ENCODE measurements at regions of chr18 and their contacts with region 1.

Region 1: GRCh38 chr18:24538414-24539264 is 78.2 kb downstream of the HRH4 start:
- DNase-seq: no peak
- H3K4me3 ChIP-seq: no peak overlapping the region
- H3K27ac ChIP-seq: peak overlapping the region in 48 of 59 donors; percentile 10 to 89 (median 64)
- H3K27me3 ChIP-seq: peaks cover 0 to 10% (median 0%) of the 10 kb centered on the region in 45 donors
- CTCF ChIP-seq: no peak

Region 2: DNA sequence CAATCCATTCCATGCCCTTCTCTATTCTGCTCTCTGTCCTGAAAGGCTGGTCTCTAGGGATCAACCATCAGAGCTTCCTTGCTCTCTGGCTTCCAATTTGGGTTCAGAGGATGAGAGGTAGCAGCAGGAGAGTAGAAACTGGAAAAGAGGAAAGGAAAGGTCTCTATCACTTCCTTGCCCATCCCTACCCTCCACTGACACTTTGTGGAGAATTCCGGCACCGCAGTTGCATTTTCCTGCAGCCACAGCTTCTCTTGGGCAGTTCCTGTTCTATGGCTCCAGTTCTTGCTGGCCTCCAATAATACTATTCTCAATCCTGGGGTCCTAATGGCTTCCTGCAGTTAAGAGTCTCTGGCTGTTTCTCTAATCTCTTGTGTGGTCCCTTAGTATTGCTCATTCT is 125.5 kb before region 1 on chr18:
- intact Hi-C with region 1: no loop called
- DNase-seq: peak in 1 of 10 donors; percentile 18
- H3K4me3 ChIP-seq: no peak overlapping the region
- H3K27ac ChIP-seq: no peak overlapping the region
- H3K27me3 ChIP-seq: peaks cover 0 to 3% (median 0%) of the 10 kb centered on the region in 45 donors
- CTCF ChIP-seq: peak in 37 of 56 donors; percentile 10 to 56 (median 31)

Region 3: DNA sequence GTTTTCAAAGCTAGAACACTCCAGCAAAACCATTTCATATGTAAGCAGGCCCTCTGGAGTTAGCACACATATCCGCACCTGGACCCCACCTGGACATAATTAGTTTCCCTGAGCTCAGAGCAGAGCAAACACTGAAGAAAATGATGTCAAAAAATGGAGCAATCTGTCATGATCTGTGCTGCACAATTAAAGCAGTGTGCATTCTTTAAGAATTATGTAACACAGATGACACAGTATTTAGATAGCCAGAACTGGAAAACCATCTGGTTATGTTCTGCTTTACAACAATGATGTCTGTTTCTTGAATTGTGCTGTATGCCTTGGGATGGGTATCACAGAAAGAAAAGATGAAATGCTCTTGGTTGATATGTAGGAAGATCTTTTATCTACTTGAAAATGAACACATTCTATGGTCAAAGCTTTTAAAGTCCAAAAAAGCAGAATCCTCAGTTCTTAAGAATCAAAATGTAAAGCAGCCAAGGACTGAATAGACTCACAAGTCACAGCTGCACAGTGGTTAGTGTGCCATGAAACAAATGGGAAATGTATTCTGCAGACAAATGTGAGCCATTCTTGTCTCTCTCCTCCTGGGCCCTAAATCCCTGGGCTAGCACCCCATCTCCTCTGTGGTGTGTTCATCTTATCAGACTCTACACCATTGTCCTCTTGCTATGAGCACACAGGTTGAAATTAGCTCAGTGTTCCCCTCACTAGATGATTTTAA is 41.4 kb before region 1 on chr18:
- intact Hi-C with region 1: loop called in 1 of 2 experiments (anchors 5 kb)
- DNase-seq: no peak
- H3K4me3 ChIP-seq: no peak overlapping the region
- H3K27ac ChIP-seq: peak overlapping the region in 53 of 59 donors; percentile 22 to 91 (median 74)
- H3K27me3 ChIP-seq: no peaks in the 10 kb centered on the region
- CTCF ChIP-seq: no peak

Region 4: DNA sequence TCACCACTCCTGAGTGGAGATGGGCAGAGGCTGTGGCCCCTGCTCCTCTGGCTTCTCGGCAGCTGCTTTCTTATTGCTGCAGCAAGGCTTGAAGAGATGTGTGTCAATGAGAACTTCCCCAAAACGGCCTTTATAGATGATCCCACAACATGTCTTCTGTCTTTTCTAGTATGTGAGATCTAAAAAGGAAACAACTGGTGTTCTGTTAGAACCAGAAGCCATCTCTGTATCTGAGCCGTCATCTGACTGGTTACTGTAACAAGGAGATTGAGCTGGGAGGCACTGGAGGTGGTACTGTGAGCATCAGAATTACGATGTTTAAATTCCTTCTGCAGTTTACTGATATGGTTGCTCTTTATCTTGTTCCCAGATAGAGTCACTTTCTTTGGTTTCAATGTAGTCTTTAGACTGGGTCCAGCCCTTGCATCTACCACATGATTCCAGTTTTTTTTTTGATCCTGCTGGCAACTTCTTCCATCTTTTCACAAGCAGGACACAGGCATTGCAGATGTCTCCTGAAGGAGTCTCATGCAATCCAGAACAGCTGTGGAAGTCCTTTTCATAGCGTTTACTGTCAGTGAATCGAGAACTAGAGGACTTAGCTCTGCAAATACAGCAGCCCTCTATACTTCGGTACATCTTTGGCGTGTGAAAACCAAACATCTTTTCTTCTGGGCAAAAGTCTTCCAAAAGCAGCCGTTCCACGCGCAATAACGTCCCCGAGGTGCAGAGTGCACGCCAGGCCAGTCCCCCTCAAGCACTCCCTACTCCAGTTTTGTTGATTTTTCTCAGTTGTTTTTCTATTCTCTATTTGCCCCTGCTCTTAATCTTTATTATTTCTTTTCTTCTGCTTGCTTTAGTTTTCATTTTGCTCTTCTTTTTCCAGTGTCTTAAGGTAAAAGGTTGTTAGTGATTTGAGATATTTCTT is 1717.3 kb after region 1 on chr18:
- intact Hi-C with region 1: no loop called
- DNase-seq: no peak
- H3K4me3 ChIP-seq: peak overlapping the region in 51 of 59 donors; percentile 1 to 63 (median 30)
- H3K27ac ChIP-seq: peak overlapping the region in 11 of 59 donors; percentile 5 to 71 (median 39)
- H3K27me3 ChIP-seq: no peaks in the 10 kb centered on the region
- CTCF ChIP-seq: no peak